ENCODE measurements at regions of chr12 and their contacts with region 1.

Region 1: DNA sequence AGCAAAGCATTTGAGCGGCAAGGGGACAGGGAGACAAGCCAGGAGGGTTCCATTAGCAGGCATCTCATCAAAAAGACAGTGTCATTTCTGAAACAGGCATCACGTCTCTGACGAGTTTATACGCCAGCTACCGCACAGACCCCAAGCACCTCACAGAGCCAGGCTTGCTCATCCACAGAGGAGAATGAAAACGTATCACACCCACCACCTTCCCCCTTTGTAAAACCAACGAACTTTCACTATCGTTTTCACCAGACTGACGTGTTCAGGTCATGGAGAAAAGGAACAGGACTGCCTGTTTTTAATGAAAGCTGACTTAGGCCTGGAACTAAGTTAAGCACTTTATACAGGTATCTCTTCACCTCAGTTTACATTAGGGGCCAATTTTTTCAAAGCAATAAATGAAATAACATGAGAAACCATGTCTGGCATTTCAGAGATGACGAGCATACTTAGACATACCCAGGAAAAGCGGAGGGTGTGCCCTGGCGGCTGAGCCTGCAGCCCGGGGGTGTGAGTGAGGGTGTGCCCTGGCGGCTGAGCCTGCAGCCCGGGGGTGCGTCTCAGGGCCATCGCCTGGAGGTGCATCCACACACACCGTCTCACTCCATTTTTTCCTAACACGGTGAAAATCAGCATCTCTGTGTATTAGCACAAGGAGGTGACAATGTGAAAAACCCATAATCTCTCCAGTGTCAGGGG is 41.9 kb downstream of the STX2 start:
- DNase-seq: peak; percentile 14
- H3K4me3 Mint-ChIP-seq: peak overlapping the region; percentile 32
- H3K27ac Mint-ChIP-seq: peak overlapping the region; percentile 65
- H3K4me1 Mint-ChIP-seq: peaks cover 15% of the 10 kb centered on the region
- H3K27me3 Mint-ChIP-seq: no peaks in the 10 kb centered on the region

Region 2: GRCh38 chr12:130761537-130762318 is 35.4 kb before region 1 on chr12:
- intact Hi-C with region 1: loop called (anchors 1 kb)
- DNase-seq: peak; percentile 22
- H3K4me3 Mint-ChIP-seq: peak overlapping the region; percentile 34
- H3K27ac Mint-ChIP-seq: no peak overlapping the region
- H3K4me1 Mint-ChIP-seq: no peaks in the 10 kb centered on the region
- H3K27me3 Mint-ChIP-seq: no peaks in the 10 kb centered on the region

Region 3: GRCh38 chr12:130775953-130776856 is 20.9 kb before region 1 on chr12:
- intact Hi-C with region 1: loop called (anchors 2 kb)
- DNase-seq: no peak
- H3K4me3 Mint-ChIP-seq: peak overlapping the region; percentile 69
- H3K27ac Mint-ChIP-seq: no peak overlapping the region
- H3K4me1 Mint-ChIP-seq: peaks cover 15% of the 10 kb centered on the region
- H3K27me3 Mint-ChIP-seq: peaks cover 26% of the 10 kb centered on the region